ENCODE measurements at regions of chr5 and their contacts with region 1.

Region 1: DNA sequence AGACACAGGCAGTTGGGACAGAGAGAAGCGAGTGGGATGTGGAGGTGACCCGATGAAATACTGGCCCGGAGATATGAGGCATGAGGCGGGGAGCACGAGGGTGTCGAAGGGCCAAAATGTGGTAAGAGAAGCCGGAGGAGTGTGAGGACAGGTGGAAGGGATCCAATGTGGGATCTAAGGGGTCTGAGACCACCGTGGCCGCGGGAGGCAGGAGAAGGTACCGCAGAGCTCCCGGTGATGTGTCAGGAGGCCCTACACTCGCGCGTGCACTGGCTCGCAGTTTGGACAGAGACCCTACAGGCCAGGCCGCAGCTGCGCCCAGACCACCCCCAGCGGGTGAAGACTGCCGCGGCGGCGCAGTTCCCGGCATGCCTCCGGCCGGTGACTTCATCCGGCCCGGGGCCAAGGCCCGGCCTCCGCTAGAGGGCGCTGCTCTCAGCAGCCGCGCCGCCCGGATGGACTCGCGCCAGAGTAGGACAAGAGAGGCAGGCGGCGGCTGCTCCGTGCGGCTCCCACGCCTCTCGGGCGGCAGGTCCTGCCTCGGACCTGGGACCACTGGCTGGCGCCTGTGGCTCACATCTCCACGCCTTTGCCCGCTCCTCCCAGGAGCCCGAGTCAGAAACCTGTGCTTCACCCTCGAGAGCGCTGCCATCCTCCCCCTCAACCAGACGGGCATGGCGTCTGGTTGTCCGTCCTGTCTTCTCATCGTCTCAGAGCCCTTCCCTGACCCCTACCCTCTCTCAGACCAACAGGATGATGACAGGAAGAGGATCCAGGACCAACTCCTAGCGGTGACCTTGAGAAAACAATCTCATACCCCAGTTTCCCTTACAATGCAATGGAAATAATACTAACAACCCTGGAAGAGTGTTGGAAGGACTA is 35.4 kb upstream of the STING1 start:
- DNase-seq: peak; percentile 92
- H3K4me3 Mint-ChIP-seq: peak overlapping the region; percentile 92
- H3K27ac Mint-ChIP-seq: peak overlapping the region; percentile 91
- H3K4me1 Mint-ChIP-seq: peaks cover 26% of the 10 kb centered on the region
- H3K27me3 Mint-ChIP-seq: no peaks in the 10 kb centered on the region

Region 2: GRCh38 chr5:139341650-139342422 is 176.1 kb before region 1 on chr5 and contains the start of gene PAIP2:
- CTCF ChIA-PET with region 1: no interaction called
- intact Hi-C with region 1: loop called (anchors 1 kb)
- DNase-seq: peak; percentile 99
- H3K4me3 Mint-ChIP-seq: peak within 1 kb of the TSS; percentile 100
- H3K27ac Mint-ChIP-seq: peak within 1 kb of the TSS; percentile 99
- H3K4me1 Mint-ChIP-seq: peaks cover 48% of the 10 kb centered on the region
- H3K27me3 Mint-ChIP-seq: no peaks in the 10 kb centered on the region
- total RNA-seq, gene PAIP2: 68.8 to 74.3 TPM

Region 3: DNA sequence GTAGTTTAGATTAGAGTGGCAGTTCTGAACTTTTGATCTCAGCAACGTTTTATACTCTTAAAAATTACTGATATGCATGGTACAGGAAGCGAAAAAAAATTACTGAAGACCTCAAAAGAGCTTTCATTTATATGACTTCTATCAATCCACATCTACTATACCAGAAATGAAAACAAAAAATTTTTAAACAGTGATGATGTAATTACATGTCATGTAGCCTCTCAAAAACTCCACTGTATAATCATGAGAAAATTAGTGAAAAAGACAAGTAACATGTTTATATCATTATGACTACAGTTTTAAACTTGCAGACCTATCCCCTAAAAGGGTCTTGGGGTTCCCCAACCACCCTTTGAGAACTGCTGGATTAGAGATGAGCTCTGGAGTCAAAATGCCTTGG is 87.9 kb before region 1 on chr5:
- CTCF ChIA-PET with region 1: interaction called, 326 read pairs
- intact Hi-C with region 1: no loop called
- DNase-seq: no peak
- H3K4me3 Mint-ChIP-seq: no peak overlapping the region
- H3K27ac Mint-ChIP-seq: peak overlapping the region; percentile 77
- H3K4me1 Mint-ChIP-seq: peaks cover 21% of the 10 kb centered on the region
- H3K27me3 Mint-ChIP-seq: no peaks in the 10 kb centered on the region

Region 4: GRCh38 chr5:139474890-139475791 is 42.8 kb before region 1 on chr5:
- CTCF ChIA-PET with region 1: interaction called, 6 read pairs
- intact Hi-C with region 1: loop called (anchors 5 kb)
- DNase-seq: peak; percentile 41
- H3K4me3 Mint-ChIP-seq: peak overlapping the region; percentile 35
- H3K27ac Mint-ChIP-seq: peak overlapping the region; percentile 84
- H3K4me1 Mint-ChIP-seq: peaks cover 83% of the 10 kb centered on the region
- H3K27me3 Mint-ChIP-seq: no peaks in the 10 kb centered on the region

Region 5: DNA sequence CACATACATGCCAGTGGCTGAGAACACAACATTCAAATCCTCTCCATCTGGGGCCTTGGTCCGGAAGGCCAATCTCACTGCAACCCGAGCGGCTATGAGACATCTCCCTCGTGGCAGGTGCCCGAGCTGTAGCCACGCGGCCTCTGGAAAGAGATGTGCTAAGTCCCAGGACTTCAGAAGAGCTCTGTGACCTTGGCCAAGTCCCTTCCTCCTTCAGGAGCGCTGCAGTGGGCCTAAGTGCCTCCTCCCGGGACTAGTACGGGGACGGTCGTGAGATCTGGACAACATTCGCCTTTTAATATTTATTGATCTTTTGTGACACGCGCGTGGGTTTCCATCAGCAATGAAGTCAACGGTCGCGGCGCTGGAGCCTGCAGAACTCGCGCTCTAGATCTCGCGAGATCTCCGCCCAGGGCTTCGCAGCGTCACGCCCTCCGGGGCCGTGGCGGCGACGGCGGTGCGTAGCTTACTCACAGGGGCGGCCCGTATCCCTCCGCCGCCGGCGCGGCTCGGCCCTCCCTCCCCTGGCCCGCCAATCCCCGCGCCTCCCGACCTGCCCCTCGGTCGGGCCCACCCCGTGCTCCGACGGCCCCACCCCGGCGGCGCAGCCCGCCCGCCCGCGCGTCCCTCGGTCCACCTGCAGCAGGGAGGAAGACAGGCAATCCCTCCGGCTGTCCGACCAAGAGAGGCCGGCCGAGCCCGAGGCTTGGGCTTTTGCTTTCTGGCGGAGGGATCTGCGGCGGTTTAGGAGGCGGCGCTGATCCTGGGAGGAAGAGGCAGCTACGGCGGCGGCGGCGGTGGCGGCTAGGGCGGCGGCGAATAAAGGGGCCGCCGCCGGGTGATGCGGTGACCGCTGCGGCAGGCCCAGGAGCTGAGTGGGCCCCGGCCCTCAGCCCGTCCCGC is 43.1 kb after region 1 on chr5 and contains the start of gene UBE2D2:
- CTCF ChIA-PET with region 1: interaction called, 4 read pairs
- intact Hi-C with region 1: loop called (anchors 1 kb)
- DNase-seq: peak; percentile 98
- H3K4me3 Mint-ChIP-seq: peak within 1 kb of the TSS; percentile 94
- H3K27ac Mint-ChIP-seq: peak within 1 kb of the TSS; percentile 96
- H3K4me1 Mint-ChIP-seq: peaks cover 33% of the 10 kb centered on the region
- H3K27me3 Mint-ChIP-seq: no peaks in the 10 kb centered on the region
- total RNA-seq, gene UBE2D2: 221 to 243 TPM